WTC11 (cell line): ENCODE measurements at regions of chr18 and their contacts with region 1.

Region 1: DNA sequence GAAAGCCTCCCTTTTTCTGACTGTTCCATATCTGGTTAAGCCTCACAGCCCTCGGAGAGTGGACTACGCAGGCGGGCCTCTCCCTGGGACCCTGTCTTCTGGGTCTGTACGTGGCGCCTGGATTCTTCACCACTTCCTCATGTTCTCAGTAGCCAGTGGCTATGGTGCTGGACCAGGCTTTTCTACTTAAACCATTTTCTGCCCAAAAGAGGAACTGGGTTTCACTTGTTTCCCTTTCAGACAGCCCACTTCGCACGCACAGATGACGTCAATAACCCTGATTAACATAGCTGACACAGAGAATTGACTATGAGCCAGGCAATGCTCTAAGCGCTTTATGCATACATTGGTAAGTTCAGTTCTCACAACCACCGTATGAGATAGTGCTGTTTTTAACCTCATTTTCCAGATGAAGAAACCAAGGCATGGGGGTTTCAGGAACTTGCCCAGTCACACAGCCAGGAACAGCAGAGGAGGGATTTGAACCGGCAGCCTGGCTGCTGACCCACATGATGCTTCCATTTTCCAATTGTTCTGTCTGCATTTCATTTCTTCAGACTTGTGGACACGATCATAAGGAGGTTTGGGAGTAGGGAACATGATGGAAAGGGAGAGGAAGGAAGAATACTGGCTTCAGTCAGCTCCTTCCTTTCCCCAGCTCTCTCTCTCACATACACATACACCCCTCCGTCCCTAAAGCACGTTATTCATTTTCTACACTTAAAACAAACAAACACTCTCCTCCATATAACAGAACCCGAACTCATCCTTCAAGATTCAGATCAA is 41.7 kb downstream of the MYOM1 start:
- DNase-seq: no peak
- ATAC-seq: no peak
- H3K4me3 Mint-ChIP-seq: no peak overlapping the region
- H3K27ac Mint-ChIP-seq: no peak overlapping the region
- H3K4me1 Mint-ChIP-seq: peaks cover 14% of the 10 kb centered on the region
- H3K27me3 Mint-ChIP-seq: no peaks in the 10 kb centered on the region
- CTCF ChIP-seq: no peak

Region 2: GRCh38 chr18:3151399-3152264 is 26.5 kb before region 1 on chr18:
- CTCF ChIA-PET with region 1: interaction called, 12 read pairs
- POLR2A ChIA-PET with region 1: no interaction called
- DNase-seq: no peak
- ATAC-seq: no peak
- H3K4me3 Mint-ChIP-seq: no peak overlapping the region
- H3K27ac Mint-ChIP-seq: no peak overlapping the region
- H3K4me1 Mint-ChIP-seq: no peaks in the 10 kb centered on the region
- H3K27me3 Mint-ChIP-seq: no peaks in the 10 kb centered on the region
- CTCF ChIP-seq: peak; percentile 55

Region 3: GRCh38 chr18:3209859-3210569 is 31.9 kb after region 1 on chr18:
- CTCF ChIA-PET with region 1: no interaction called
- POLR2A ChIA-PET with region 1: no interaction called
- DNase-seq: no peak
- ATAC-seq: no peak
- H3K4me3 Mint-ChIP-seq: no peak overlapping the region
- H3K27ac Mint-ChIP-seq: no peak overlapping the region
- H3K4me1 Mint-ChIP-seq: peaks cover 15% of the 10 kb centered on the region
- H3K27me3 Mint-ChIP-seq: no peaks in the 10 kb centered on the region
- CTCF ChIP-seq: no peak